ENCODE measurements at regions of chr1 and their contacts with region 1.

Region 1: GRCh38 chr1:22780696-22781095 is 70.1 kb downstream of the EPHB2 start:
- DNase-seq: no peak
- ATAC-seq: peak in 1 of 2 donors; percentile 35
- H3K4me3 ChIP-seq: no peak overlapping the region
- H3K27ac ChIP-seq: no peak overlapping the region
- H3K4me1 ChIP-seq: peaks cover 6% of the 10 kb centered on the region
- H3K27me3 ChIP-seq: no peaks in the 10 kb centered on the region

Region 2: DNA sequence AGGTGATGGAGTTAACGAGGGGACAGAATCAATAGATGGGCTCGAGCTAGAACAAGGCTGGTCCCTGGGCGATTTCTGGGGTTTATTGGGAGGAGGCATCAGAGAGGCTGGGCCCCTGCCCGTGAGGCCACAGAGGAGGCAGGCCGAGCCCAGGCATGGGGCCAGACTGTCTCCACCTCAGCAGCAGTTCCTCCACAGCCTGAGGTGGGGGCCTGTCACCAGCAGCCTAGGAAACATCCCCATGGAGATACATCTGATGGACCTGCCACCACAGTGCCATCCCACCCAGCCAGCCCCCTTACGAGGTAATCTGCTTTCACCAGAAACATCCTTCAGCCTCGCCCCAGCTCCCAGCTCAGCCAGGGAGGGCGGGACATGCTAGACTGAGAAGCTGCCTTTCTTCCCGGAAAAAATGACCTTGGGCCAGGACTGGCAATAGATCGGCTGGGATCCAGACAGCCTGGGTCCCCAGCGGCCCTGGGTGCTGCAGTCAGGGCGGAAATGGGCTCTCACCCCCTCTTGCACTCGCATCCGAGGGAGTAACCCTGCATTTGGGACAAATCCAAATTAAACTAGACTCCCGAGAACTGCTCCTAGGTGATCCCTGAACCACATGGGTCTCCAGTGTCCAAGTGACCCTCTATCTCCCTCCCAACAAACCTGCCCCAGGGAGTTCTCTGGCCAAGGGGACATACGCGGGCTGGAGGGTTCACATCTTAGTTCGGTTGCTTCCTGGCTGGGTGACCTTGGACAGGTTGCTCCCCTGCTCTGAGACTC is 227.4 kb before region 1 on chr1:
- intact Hi-C with region 1: no loop called
- DNase-seq: no peak
- ATAC-seq: no peak
- H3K4me3 ChIP-seq: no peak overlapping the region
- H3K27ac ChIP-seq: no peak overlapping the region
- H3K4me1 ChIP-seq: no peaks in the 10 kb centered on the region
- H3K27me3 ChIP-seq: no peaks in the 10 kb centered on the region

Region 3: DNA sequence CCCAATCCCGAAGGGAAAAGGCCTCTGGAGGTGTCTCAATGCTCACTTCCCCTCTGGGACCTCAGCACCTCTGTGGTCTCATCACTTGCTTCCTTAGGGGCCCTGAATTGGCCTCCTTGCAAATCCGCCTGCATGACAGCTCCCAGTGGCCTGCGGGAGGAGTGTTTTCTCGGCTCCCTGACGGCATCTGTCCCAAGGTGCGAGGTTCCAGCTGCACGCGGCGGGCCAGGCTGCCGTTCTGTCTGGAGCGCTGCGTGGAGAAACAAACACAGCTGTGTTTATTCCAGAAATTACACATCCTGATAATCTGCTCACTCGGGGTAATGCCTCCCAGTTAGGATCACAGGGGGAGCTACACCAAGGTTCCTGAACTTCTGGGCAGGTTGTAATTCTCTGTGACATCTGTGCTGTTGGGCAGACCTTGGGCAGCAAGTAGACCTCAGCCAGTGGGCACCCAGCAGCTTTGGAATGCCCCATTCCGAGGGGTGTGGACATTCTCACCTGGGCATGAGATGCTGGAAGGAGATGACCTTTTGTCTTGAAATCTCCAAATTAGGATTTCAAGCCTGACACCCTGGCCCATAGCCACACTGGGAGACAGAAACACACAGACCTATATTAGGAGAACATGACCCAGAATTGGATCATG is 51.8 kb before region 1 on chr1:
- intact Hi-C with region 1: loop called in 1 of 4 experiments (anchors 10 kb)
- DNase-seq: no peak
- ATAC-seq: no peak
- H3K4me3 ChIP-seq: no peak overlapping the region
- H3K27ac ChIP-seq: no peak overlapping the region
- H3K4me1 ChIP-seq: no peaks in the 10 kb centered on the region
- H3K27me3 ChIP-seq: no peaks in the 10 kb centered on the region